PC-3 (cell line): ENCODE measurements at regions of chr2 and their contacts with region 1.

Region 1: DNA sequence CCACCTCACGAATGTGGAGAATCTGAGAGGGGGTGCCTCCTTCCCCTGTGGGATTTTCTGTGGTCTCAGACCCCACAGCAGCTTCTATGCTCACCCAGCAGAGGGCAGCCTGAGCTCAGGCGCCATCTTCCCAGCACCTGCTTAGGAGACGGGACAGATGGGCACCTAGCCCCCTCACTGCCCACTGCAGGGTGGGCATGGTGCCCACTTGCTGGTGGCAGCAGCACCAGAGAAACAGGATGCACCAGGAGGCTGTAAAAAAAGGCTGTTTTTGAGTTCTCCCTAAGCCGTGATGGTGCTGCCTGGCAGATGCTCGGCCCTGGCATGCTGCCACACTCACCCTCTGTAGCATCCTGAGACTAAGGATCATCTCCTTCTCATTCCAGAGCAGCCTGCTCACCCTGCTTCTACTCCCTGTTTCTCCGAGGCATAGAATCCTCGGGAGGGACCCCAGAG is 19.1 kb upstream of the SLC20A1 start:
- DNase-seq: peak; percentile 72
- ATAC-seq: peak; percentile 37
- H3K4me3 ChIP-seq: peak overlapping the region; percentile 47; the same call in 1 of the 2 replicates
- H3K27ac ChIP-seq: peak overlapping the region; percentile 94
- H3K4me1 ChIP-seq: peaks cover 93% of the 10 kb centered on the region
- H3K27me3 ChIP-seq: no peaks in the 10 kb centered on the region
- CTCF ChIP-seq: peak; percentile 95

Region 2: DNA sequence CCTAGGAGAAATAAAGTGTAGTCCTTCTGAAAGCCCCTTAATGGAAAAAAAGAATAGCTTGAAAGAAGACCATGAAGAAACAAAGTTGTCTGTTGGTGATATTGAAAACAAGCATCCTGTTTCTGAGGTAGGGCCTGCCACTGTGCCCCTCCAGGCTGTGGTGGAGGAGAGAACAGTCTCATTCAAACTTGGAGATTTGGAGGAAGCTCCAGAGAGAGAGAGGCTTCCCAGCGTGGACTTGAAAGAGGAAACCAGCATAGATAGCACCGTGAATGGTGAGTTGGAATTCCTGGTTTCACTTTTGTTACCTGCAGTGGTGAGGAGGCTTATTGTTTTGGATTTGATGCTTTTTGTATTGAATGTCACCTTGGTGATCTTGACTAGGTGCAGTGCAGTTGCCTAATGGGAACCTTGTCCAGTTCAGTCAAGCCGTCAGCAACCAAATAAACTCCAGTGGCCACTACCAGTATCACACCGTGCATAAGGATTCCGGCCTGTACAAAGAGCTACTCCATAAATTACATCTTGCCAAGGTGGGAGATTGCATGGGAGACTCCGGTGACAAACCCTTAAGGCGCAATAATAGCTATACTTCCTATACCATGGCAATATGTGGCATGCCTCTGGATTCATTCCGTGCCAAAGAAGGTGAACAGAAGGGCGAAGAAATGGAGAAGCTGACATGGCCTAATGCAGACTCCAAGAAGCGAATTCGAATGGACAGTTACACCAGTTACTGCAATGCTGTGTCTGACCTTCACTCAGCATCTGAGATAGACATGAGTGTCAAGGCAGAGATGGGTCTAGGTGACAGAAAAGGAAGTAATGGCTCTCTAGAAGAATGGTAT is 32.4 kb after region 1 on chr2:
- CTCF ChIA-PET with region 1: interaction called, 16 read pairs
- POLR2A ChIA-PET with region 1: interaction called, 3 read pairs
- intact Hi-C with region 1: no loop called
- DNase-seq: peak; percentile 25
- ATAC-seq: 0 out of 2 replicates have a peak, but pooled peaks have one; percentile 4
- H3K4me3 ChIP-seq: no peak overlapping the region
- H3K27ac ChIP-seq: no peak overlapping the region
- H3K4me1 ChIP-seq: peaks cover 40% of the 10 kb centered on the region
- H3K27me3 ChIP-seq: no peaks in the 10 kb centered on the region
- CTCF ChIP-seq: no peak

Region 3: GRCh38 chr2:112692496-112692911 is 65.9 kb after region 1 on chr2:
- CTCF ChIA-PET with region 1: interaction called, 3 read pairs
- POLR2A ChIA-PET with region 1: no interaction called
- intact Hi-C with region 1: loop called (anchors 1 kb)
- DNase-seq: peak; percentile 96
- ATAC-seq: peak; percentile 80
- H3K4me3 ChIP-seq: no peak overlapping the region
- H3K27ac ChIP-seq: peak overlapping the region; percentile 66
- H3K4me1 ChIP-seq: peaks cover 49% of the 10 kb centered on the region
- H3K27me3 ChIP-seq: no peaks in the 10 kb centered on the region
- CTCF ChIP-seq: no peak